IMR-90 (cell line): ENCODE measurements at regions of chr22 and their contacts with region 1.

Region 1: DNA sequence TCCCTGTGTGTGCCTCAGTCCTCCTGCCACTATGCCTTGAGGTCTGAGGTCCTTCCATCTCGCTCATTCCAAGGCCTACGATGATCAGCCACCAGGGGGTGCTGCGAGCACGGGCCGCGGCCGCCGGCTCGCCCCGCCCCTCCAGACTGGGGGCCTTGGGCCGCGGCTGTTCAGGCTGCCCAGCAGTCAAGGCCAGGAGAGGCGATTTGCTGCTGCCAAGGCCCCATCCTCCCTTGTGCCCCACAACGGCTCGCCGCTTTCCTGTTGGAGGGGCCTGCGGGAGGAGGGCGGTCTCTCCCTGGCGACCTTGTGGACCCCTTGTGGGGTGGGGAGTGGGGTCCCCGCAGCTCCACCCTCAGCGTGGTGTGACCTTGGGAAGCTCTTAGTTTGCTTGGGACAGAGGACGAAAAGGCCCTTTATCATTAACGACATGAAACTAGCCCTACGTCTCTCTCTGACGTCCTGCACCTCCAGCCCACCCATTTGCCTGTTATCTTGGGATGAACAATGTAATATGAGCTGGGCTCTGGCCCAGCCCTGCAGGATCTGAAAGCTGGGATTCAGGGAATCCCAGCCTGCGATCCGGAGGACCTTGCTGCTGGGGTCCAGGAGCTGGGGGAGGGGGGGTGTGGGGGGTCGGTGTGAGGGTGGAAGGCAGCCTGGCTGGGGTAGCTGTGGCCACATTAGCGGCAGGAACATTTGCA is 5.3 kb upstream of the GALR3 start:
- DNase-seq: peak; percentile 68
- ATAC-seq: peak; percentile 97
- H3K4me3 ChIP-seq: peak overlapping the region; percentile 21
- H3K27ac ChIP-seq: peak overlapping the region; percentile 23
- H3K4me1 ChIP-seq: peaks cover 10% of the 10 kb centered on the region
- H3K27me3 ChIP-seq: peaks cover 12% of the 10 kb centered on the region
- CTCF ChIP-seq: peak; percentile 98
- POLR2A ChIP-seq: peak; percentile 42; the same call in 1 of the 2 replicates
- RAD21 ChIP-seq: peak; percentile 94

Region 2: GRCh38 chr22:37330200-37331033 is 487.4 kb before region 1 on chr22:
- CTCF ChIA-PET with region 1: no interaction called
- POLR2A ChIA-PET with region 1: no interaction called
- dilution Hi-C with region 1: no loop called
- in situ Hi-C with region 1: no loop called
- intact Hi-C with region 1: no loop called
- DNase-seq: peak; percentile 90
- ATAC-seq: peak; percentile 44
- H3K4me3 ChIP-seq: no peak overlapping the region
- H3K27ac ChIP-seq: no peak overlapping the region; the same call in 1 of the 2 replicates
- H3K4me1 ChIP-seq: peaks cover 24% of the 10 kb centered on the region
- H3K27me3 ChIP-seq: peaks cover 12% of the 10 kb centered on the region
- CTCF ChIP-seq: peak; percentile 33
- POLR2A ChIP-seq: no peak
- RAD21 ChIP-seq: no peak

Region 3: GRCh38 chr22:37741312-37741795 is 76.5 kb before region 1 on chr22:
- CTCF ChIA-PET with region 1: no interaction called
- POLR2A ChIA-PET with region 1: no interaction called
- dilution Hi-C with region 1: no loop called
- in situ Hi-C with region 1: no loop called
- intact Hi-C with region 1: no loop called
- DNase-seq: peak; percentile 98
- ATAC-seq: peak; percentile 18
- H3K4me3 ChIP-seq: no peak overlapping the region
- H3K27ac ChIP-seq: peak overlapping the region; percentile 46
- H3K4me1 ChIP-seq: peaks cover 38% of the 10 kb centered on the region
- H3K27me3 ChIP-seq: no peaks in the 10 kb centered on the region
- CTCF ChIP-seq: no peak
- POLR2A ChIP-seq: no peak
- RAD21 ChIP-seq: no peak

Region 4: DNA sequence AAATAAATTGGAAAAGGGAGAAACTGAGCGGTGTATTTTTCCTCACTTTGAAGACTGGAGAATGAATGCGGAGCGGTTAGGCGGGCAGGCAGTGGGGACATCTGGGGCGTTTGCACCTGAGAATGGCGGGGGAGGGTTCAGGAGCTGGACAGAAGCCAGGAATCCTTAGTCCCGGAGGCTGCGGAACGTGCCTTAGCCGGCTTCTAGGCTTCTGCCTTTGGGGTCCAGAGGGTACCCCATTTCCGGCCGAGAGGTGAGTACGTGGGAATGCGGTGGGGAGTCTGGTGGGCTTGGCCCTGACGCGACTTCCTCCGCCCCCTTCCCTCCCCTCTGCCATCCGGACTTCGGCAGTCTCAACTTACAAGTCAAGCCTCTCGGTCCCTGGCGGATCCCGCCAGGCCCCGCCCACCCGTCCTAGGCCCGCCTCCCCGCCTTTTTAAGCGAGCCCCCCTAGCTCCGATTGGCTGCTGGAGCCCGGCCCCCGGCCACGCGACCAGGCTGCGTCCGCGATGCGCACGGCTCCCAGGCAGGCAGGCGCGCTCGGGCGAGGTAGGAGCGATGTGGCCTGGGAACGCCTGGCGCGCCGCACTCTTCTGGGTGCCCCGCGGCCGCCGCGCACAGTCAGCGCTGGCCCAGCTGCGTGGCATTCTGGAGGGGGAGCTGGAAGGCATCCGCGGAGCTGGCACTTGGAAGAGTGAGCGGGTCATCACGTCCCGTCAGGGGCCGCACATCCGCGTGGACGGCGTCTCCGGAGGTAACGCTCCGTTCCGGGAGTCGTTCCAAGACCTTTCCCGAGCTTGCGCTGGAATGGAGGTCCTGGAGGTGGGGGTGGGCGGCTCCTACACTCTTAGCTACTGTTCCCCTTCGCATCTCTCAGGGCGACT is 10.2 kb before region 1 on chr22 and contains the start of gene GCAT:
- CTCF ChIA-PET with region 1: interaction called, 10 read pairs
- POLR2A ChIA-PET with region 1: no interaction called
- dilution Hi-C with region 1: no loop called
- in situ Hi-C with region 1: no loop called
- intact Hi-C with region 1: no loop called
- DNase-seq: peak; percentile 95
- ATAC-seq: peak; percentile 89
- H3K4me3 ChIP-seq: peak within 1 kb of the TSS; percentile 77
- H3K27ac ChIP-seq: peak within 1 kb of the TSS; percentile 42
- H3K4me1 ChIP-seq: peaks cover 12% of the 10 kb centered on the region
- H3K27me3 ChIP-seq: no peaks in the 10 kb centered on the region
- CTCF ChIP-seq: no peak
- POLR2A ChIP-seq: peak; percentile 80
- RAD21 ChIP-seq: no peak
- total RNA-seq, gene GCAT: 25.6 and 32.3 TPM in 2 replicates

Region 5: GRCh38 chr22:37832022-37832857 is 14.4 kb after region 1 on chr22:
- CTCF ChIA-PET with region 1: no interaction called
- POLR2A ChIA-PET with region 1: interaction called, 20 read pairs
- dilution Hi-C with region 1: no loop called
- in situ Hi-C with region 1: no loop called
- intact Hi-C with region 1: no loop called
- DNase-seq: no peak
- ATAC-seq: no peak
- H3K4me3 ChIP-seq: no peak overlapping the region
- H3K27ac ChIP-seq: no peak overlapping the region
- H3K4me1 ChIP-seq: no peaks in the 10 kb centered on the region
- H3K27me3 ChIP-seq: no peaks in the 10 kb centered on the region
- CTCF ChIP-seq: no peak
- POLR2A ChIP-seq: no peak
- RAD21 ChIP-seq: no peak

Region 6: GRCh38 chr22:37862570-37863325 is 44.9 kb after region 1 on chr22:
- CTCF ChIA-PET with region 1: interaction called, 21 read pairs
- POLR2A ChIA-PET with region 1: no interaction called
- dilution Hi-C with region 1: no loop called
- in situ Hi-C with region 1: loop called (anchors 5 kb)
- intact Hi-C with region 1: loop called (anchors 1 kb)
- DNase-seq: peak; percentile 29
- ATAC-seq: peak; percentile 8; the same call in 1 of the 2 replicates
- H3K4me3 ChIP-seq: no peak overlapping the region
- H3K27ac ChIP-seq: no peak overlapping the region
- H3K4me1 ChIP-seq: peaks cover 5% of the 10 kb centered on the region
- H3K27me3 ChIP-seq: no peaks in the 10 kb centered on the region
- CTCF ChIP-seq: no peak
- POLR2A ChIP-seq: no peak
- RAD21 ChIP-seq: no peak

Region 7: DNA sequence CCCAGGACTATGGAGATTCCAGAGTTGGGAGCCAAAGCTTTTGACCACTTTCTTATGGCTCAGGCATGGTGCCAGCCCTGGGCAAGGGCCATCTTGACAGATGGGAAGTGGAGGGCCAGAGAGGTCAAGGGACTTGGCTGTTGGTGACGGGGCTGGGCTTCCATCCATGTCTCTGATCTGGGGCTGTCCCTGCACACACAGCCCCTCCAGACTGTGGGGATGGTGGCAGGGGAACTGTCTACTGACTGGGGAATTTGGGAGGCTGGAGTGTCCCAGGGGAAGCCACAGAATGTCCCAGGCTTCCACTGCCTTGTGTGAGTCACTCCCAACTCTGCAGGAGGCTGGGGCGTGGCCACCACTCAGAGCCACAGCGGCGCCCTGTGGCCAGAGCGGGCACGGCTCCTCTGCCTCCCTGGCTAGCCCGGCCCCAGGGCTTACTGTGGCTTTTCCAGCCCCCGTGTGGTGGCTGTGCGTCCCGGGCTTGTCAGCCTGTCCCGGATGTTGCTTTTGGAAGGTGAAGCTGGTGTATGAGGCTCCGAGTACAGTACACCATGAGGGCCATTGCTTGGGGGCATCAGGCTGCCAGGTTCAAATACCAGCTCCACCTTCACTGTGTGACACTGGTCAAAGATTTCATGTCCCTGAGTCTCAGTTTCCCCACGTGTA is 116.0 kb after region 1 on chr22:
- CTCF ChIA-PET with region 1: no interaction called
- POLR2A ChIA-PET with region 1: no interaction called
- dilution Hi-C with region 1: no loop called
- in situ Hi-C with region 1: no loop called
- intact Hi-C with region 1: loop called (anchors 5 kb)
- DNase-seq: peak; percentile 86
- ATAC-seq: peak; percentile 99
- H3K4me3 ChIP-seq: no peak overlapping the region
- H3K27ac ChIP-seq: peak overlapping the region; percentile 48
- H3K4me1 ChIP-seq: peaks cover 16% of the 10 kb centered on the region
- H3K27me3 ChIP-seq: no peaks in the 10 kb centered on the region
- CTCF ChIP-seq: peak; percentile 99
- POLR2A ChIP-seq: no peak
- RAD21 ChIP-seq: peak; percentile 69

Region 8: DNA sequence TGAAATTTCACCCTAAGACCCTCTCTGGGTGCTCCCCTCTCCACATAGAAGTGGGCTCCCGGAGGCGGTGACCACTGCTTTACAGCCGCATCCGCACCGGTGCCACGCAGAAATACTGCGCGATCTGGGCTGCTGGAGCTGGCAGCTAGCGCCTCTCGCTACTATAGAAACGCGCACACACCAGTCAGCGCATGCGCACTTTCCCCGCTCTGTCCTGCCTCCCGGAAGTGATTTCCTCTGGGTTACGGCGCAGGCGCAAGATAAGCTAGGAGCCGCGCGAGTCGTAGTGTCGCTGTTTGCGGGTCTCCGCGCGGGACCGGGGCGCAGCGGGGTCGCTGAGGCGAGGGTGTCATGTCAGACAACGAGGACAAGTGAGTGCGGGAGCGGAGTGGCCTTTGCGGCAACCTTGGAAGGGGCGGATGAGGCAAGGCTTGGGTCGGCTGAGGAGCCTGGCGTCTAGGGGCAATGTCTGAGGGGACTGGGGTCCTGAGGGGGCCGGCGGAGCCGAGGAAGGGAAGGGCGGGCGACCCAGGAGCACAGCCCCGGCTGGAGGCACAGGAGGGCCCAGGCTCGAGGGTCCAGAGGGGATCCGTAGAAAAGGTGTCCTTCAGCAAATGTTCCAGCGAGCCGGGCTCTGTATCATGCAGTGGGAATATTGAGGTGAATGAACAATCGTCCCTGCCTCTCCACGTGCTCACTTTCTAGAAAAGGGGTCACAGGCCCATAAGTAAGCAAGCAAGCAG is 135.8 kb after region 1 on chr22 and contains the starts of genes C22orf23 and POLR2F:
- CTCF ChIA-PET with region 1: no interaction called
- POLR2A ChIA-PET with region 1: no interaction called
- dilution Hi-C with region 1: no loop called
- in situ Hi-C with region 1: no loop called
- intact Hi-C with region 1: no loop called
- DNase-seq: peak; percentile 92
- ATAC-seq: peak; percentile 88
- H3K4me3 ChIP-seq: peak within 1 kb of the TSS; percentile 80
- H3K27ac ChIP-seq: peak within 1 kb of the TSS; percentile 89
- H3K4me1 ChIP-seq: peaks cover 5% of the 10 kb centered on the region
- H3K27me3 ChIP-seq: no peaks in the 10 kb centered on the region
- CTCF ChIP-seq: no peak
- POLR2A ChIP-seq: peak; percentile 72
- RAD21 ChIP-seq: no peak
- total RNA-seq, gene C22orf23: 0.28 and 0.54 TPM in 2 replicates
- total RNA-seq, gene POLR2F: 26.0 and 68.6 TPM in 2 replicates

Region 9: GRCh38 chr22:37965940-37966664 is 148.2 kb after region 1 on chr22:
- CTCF ChIA-PET with region 1: interaction called, 6 read pairs
- POLR2A ChIA-PET with region 1: interaction called, 3 read pairs
- dilution Hi-C with region 1: no loop called
- in situ Hi-C with region 1: no loop called
- intact Hi-C with region 1: loop called (anchors 1 kb)
- DNase-seq: peak; percentile 11
- ATAC-seq: peak; percentile 49
- H3K4me3 ChIP-seq: no peak overlapping the region
- H3K27ac ChIP-seq: no peak overlapping the region
- H3K4me1 ChIP-seq: peaks cover 7% of the 10 kb centered on the region
- H3K27me3 ChIP-seq: no peaks in the 10 kb centered on the region
- CTCF ChIP-seq: no peak
- POLR2A ChIP-seq: no peak
- RAD21 ChIP-seq: no peak